ENCODE measurements at regions of chr22 and their contacts with region 1.

Region 1: GRCh38 chr22:16783930-16784354 is 41.3 kb downstream of the XKR3 start:
- DNase-seq: peak; percentile 8
- ATAC-seq: peak; percentile 95
- H3K4me3 ChIP-seq: no peak overlapping the region
- H3K27ac ChIP-seq: no peak overlapping the region
- H3K4me1 ChIP-seq: no peaks in the 10 kb centered on the region
- H3K27me3 ChIP-seq: no peaks in the 10 kb centered on the region
- CTCF ChIP-seq: peak; percentile 10 to 73 (median 69); a peak in 4 of 6 replicates
- POLR2A ChIP-seq: no peak
- RAD21 ChIP-seq: peak; percentile 15; the same call in 1 of the 2 replicates

Region 2: GRCh38 chr22:16834971-16835370 is 51.0 kb after region 1 on chr22:
- CTCF ChIA-PET with region 1: no interaction called
- POLR2A ChIA-PET with region 1: no interaction called
- RAD21 ChIA-PET with region 1: no interaction called
- intact Hi-C with region 1: loop called (anchors 10 kb)
- DNase-seq: no peak
- ATAC-seq: no peak
- H3K4me3 ChIP-seq: no peak overlapping the region
- H3K27ac ChIP-seq: no peak overlapping the region
- H3K4me1 ChIP-seq: no peaks in the 10 kb centered on the region
- H3K27me3 ChIP-seq: no peaks in the 10 kb centered on the region
- CTCF ChIP-seq: no peak
- POLR2A ChIP-seq: no peak
- RAD21 ChIP-seq: no peak

Region 3: GRCh38 chr22:16917144-16918003 is 133.4 kb after region 1 on chr22:
- CTCF ChIA-PET with region 1: no interaction called
- POLR2A ChIA-PET with region 1: no interaction called
- RAD21 ChIA-PET with region 1: no interaction called
- intact Hi-C with region 1: no loop called
- DNase-seq: peak; percentile 65
- ATAC-seq: peak; percentile 95
- H3K4me3 ChIP-seq: no peak overlapping the region
- H3K27ac ChIP-seq: no peak overlapping the region
- H3K4me1 ChIP-seq: peaks cover 4 to 6% of the 10 kb centered on the region in 2 experiments
- H3K27me3 ChIP-seq: peaks cover 9% of the 10 kb centered on the region; the same call in 1 of the 2 replicates
- CTCF ChIP-seq: peak; percentile 41 to 81 (median 79); a peak in 5 of 6 replicates
- POLR2A ChIP-seq: no peak
- RAD21 ChIP-seq: peak; percentile 51; the same call in 1 of the 2 replicates

Region 4: DNA sequence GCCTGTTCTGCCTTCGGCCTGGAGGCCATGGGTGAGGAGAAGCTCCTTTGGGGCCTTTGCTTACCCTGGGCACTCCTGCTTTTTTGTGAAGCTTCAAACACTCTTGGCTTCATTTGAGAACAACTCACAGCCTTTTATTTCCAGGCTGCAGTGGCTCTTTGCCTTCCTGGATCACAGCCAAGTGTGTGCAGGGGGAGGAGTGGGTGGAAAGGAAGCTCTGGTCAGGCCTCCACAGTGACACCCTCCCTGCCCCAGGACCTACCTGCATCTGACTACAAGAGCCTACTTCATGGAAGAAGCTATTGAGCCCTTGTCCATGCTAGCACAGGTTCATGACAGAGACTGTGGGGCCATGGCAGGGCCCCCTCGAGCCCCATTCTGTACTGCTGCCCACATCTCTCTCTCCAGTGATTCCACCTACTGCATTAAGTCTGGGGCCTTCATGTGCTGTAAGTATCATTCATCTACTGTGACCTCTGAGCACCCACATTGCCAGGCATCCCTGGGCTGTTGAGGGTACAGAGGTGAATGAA is 171.8 kb after region 1 on chr22:
- CTCF ChIA-PET with region 1: no interaction called
- POLR2A ChIA-PET with region 1: no interaction called
- RAD21 ChIA-PET with region 1: no interaction called
- intact Hi-C with region 1: no loop called
- DNase-seq: no peak
- ATAC-seq: no peak
- H3K4me3 ChIP-seq: no peak overlapping the region
- H3K27ac ChIP-seq: no peak overlapping the region
- H3K4me1 ChIP-seq: peaks cover 2 to 4% of the 10 kb centered on the region in 2 experiments; a peak in 2 of 4 replicates
- H3K27me3 ChIP-seq: no peaks in the 10 kb centered on the region
- CTCF ChIP-seq: no peak
- POLR2A ChIP-seq: no peak
- RAD21 ChIP-seq: no peak